ENCODE measurements at regions of chr15 and their contacts with region 1.

Region 1: GRCh38 chr15:46293550-46293949 is 658.7 kb downstream of the SQOR start:
- DNase-seq: no peak
- H3K4me3 ChIP-seq: no peak overlapping the region
- H3K27ac ChIP-seq: no peak overlapping the region
- H3K4me1 ChIP-seq: peaks cover 0 to 7% (median 0%) of the 10 kb centered on the region in 4 experiments; a peak in 1 of 7 replicates
- H3K27me3 ChIP-seq: no peaks in the 10 kb centered on the region
- CTCF ChIP-seq: no peak
- EP300 ChIP-seq: no peak
- POLR2A ChIP-seq: no peak
- RAD21 ChIP-seq: no peak; a peak in 1 of 4 replicates

Region 2: GRCh38 chr15:46304320-46304719 is 10.8 kb after region 1 on chr15:
- CTCF ChIA-PET with region 1: interaction called, 24 read pairs
- POLR2A ChIA-PET with region 1: no interaction called
- DNase-seq: peak in 1 of 2 experiments; percentile 68
- H3K4me3 ChIP-seq: no peak overlapping the region
- H3K27ac ChIP-seq: no peak overlapping the region
- H3K4me1 ChIP-seq: no peaks in the 10 kb centered on the region
- H3K27me3 ChIP-seq: no peaks in the 10 kb centered on the region
- CTCF ChIP-seq: peak; percentile 45 to 80 (median 65)
- EP300 ChIP-seq: no peak
- POLR2A ChIP-seq: no peak
- RAD21 ChIP-seq: peak; percentile 45 to 63